Panc1 (cell line): ENCODE measurements at regions of chr17 and their contacts with region 1.

Region 1: DNA sequence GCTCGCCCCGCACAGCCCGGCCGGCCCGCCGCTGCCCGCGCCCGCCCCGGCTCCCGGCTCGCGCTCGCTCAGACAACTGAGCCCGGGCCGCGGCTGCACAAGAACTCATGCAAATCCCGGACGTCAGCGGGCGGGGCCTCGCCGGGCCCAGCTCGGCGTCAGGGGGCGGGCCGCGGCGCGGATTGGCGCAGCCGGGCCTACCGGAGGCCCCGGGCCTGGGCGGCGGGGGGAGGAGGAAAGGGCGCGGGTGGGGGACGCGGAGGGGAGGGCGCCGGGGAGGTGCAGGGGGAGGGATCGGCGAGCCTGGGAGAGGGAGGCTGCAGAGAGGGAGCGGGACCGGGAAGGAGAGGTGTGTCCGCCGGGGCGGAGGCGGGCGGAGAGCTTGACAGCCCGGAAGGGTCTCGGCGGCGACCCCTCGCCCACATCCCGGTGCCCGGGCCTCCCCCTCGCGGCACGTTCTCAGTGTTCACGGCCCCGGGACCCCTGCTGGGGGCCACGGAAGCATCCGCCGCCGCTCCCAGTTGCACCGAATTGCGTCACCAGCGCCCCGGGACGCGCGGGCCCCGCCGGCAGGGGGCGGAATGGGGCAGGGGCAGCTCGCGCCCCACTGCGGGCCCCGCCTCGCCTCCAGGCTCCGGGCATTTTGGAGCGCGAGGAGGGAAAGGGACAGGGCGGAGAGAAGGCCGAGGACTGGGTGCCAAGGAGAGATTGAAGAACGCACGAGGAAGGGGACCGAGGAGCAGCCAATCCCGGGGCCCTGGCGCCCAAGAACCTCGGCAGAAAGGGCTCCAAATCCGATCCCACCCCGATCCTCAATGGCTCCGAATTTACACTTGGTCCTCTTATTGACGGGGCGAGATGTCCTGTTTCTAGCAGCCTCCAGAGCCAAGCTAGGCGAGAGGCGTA is at the start of gene CBX4:
- DNase-seq: no peak
- ATAC-seq: peak; percentile 74
- H3K4me3 ChIP-seq: peak within 1 kb of the TSS; percentile 65 to 97
- H3K27ac ChIP-seq: peak within 1 kb of the TSS; percentile 86
- H3K4me1 ChIP-seq: peaks cover 39% of the 10 kb centered on the region
- H3K27me3 ChIP-seq: no peaks in the 10 kb centered on the region
- CTCF ChIP-seq: peak; percentile 95
- total RNA-seq, gene CBX4: 48.6 TPM

Region 2: DNA sequence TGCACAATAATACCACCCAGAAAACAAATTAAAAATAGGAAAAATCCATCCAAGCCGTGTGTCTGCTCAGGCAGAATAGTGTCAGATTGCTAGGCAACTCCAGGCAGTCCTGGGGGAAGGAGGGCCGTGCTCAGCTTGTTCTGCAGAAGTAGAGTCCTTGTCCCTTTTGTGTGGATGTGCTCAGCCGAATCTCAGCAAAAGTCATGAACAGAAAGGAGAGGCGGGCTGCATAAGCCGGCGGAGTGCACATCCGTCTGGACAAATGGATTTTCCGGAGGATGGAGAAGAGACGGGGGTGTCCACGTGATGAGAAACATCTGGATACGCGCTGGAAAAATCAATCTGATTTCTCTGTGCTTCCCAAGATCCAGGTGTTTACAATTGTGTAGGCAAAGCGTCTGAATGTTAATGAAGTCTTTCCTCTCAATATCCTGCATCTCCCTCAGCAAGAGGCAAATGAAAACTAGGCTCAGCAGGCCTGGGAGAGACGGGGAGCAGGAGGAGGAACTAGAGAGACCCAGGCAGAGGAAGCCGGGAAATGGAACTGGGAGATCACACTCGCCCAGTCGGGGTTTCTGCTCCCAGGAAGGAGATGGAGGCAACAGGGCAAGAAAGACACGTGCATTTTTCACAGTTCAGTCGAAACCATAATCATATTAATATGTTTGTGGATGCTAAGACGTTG is 221.1 kb before region 1 on chr17:
- CTCF ChIA-PET with region 1: no interaction called
- POLR2A ChIA-PET with region 1: no interaction called
- in situ Hi-C with region 1: no loop called
- intact Hi-C with region 1: no loop called
- DNase-seq: no peak
- ATAC-seq: no peak
- H3K4me3 ChIP-seq: no peak overlapping the region
- H3K27ac ChIP-seq: no peak overlapping the region
- H3K4me1 ChIP-seq: no peaks in the 10 kb centered on the region
- H3K27me3 ChIP-seq: peaks cover 22% of the 10 kb centered on the region
- CTCF ChIP-seq: no peak

Region 3: GRCh38 chr17:79741751-79742588 is 97.6 kb before region 1 on chr17:
- CTCF ChIA-PET with region 1: interaction called, 4 read pairs
- POLR2A ChIA-PET with region 1: no interaction called
- in situ Hi-C with region 1: no loop called
- intact Hi-C with region 1: loop called (anchors 10 kb)
- DNase-seq: no peak
- ATAC-seq: peak; percentile 85
- H3K4me3 ChIP-seq: peak overlapping the region; percentile 15 to 21; a peak in 3 of 4 replicates
- H3K27ac ChIP-seq: no peak overlapping the region
- H3K4me1 ChIP-seq: peaks cover 5% of the 10 kb centered on the region; the same call in 1 of the 2 replicates
- H3K27me3 ChIP-seq: no peaks in the 10 kb centered on the region
- CTCF ChIP-seq: peak; percentile 100

Region 4: DNA sequence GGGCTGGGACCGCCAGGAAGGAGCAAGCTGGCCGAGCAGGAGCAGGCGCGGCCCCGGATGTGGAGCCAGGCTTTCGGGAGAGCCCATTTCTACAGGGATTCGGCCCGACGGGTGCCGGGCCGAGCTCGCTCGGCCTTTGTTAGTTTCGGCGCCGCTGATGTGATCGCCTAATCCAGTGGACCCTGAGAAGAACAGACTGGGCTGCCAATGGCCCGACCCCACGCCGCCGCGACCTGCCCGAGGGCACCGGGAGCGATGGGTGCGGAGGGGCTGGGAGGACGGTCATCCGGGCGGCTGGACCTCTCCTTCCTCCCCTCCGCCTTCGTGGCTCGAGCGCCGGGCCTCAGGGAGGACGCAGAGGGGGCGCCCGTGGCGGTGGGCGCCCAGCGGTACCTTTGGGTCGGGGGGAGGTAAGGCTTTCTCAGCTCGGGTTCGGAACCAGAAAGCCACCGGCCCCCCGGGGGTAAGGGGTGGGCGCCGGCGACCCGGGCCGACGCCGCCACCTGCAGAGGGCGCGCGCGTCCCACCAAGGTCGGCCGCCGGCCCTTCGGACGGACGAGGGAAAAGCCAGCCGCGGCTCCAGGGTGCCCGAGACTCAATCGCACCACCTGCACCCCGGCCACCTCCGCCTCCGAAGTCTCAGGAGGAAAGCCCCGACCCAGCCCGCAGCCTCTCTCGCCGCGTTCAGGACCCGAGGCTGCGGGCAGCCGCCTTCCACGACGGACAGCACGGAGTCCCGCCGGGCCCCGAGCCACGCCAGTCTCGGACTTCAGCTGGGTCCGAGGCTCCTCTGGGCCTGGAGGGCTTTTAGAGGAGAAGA is 49.9 kb before region 1 on chr17:
- CTCF ChIA-PET with region 1: interaction called, 17 read pairs
- POLR2A ChIA-PET with region 1: no interaction called
- in situ Hi-C with region 1: no loop called
- intact Hi-C with region 1: no loop called
- DNase-seq: no peak
- ATAC-seq: peak; percentile 56
- H3K4me3 ChIP-seq: peak overlapping the region; percentile 8 to 35; a peak in 3 of 4 replicates
- H3K27ac ChIP-seq: 0 out of 2 replicates have a peak overlapping the region, but pooled peaks have one; percentile 30
- H3K4me1 ChIP-seq: peaks cover 15% of the 10 kb centered on the region
- H3K27me3 ChIP-seq: no peaks in the 10 kb centered on the region
- CTCF ChIP-seq: peak; percentile 99

Region 5: DNA sequence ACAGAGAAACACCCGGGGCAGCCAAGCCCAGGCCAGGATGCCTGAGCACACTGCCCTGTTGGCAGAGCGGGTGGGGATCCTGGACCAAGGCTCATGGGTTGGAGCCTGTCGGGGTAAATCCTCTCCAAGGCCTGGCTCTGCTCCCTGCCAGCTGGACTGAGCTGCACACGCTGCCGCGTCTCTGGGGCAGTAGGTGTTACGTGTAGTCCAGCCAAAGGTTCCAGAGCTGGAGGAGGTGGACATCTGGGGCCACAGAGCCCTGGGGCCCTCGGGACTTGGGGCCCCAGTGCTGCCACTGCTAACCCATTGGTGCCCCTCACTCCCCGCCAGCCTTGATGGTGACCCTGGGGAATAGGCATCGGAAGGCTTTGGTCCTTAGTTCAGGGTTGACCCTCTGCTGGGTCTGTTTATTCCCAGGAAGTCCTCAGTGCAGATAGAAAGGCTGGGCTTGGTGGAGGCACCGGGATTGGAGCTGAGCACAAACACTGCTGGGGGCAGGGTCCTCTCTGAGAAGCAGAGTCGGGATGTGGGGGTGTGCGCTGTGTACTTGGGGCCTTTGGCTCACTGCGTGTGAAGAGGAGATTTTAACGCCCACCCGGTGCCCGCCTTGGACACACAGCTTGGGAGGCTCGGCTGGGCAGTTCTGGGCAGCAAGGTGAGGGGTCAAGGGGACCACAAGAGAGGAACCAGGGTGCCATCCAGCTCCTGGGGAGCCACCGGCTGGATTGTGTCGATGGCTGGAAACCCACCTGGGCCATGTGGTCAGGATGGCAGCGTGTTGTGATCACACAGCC is 15.9 kb after region 1 on chr17:
- CTCF ChIA-PET with region 1: interaction called, 11 read pairs
- POLR2A ChIA-PET with region 1: no interaction called
- in situ Hi-C with region 1: no loop called
- intact Hi-C with region 1: no loop called
- DNase-seq: no peak
- ATAC-seq: no peak
- H3K4me3 ChIP-seq: no peak overlapping the region
- H3K27ac ChIP-seq: no peak overlapping the region
- H3K4me1 ChIP-seq: no peaks in the 10 kb centered on the region
- H3K27me3 ChIP-seq: no peaks in the 10 kb centered on the region
- CTCF ChIP-seq: no peak

Region 6: GRCh38 chr17:79991140-79991923 is 151.7 kb after region 1 on chr17:
- CTCF ChIA-PET with region 1: interaction called, 4 read pairs
- POLR2A ChIA-PET with region 1: interaction called, 4 read pairs
- in situ Hi-C with region 1: no loop called
- intact Hi-C with region 1: loop called (anchors 5 kb)
- DNase-seq: no peak
- ATAC-seq: peak; percentile 90
- H3K4me3 ChIP-seq: peak overlapping the region; percentile 32 to 63
- H3K27ac ChIP-seq: peak overlapping the region; percentile 64
- H3K4me1 ChIP-seq: peaks cover 72% of the 10 kb centered on the region
- H3K27me3 ChIP-seq: no peaks in the 10 kb centered on the region
- CTCF ChIP-seq: no peak; the same call in 1 of the 2 replicates